Activated CD4-positive, alpha-beta memory T cell treated with anti-CD3 and anti-CD28 coated beads for 36 hours (primary cell): ENCODE measurements at regions of chr2 and their contacts with region 1.

Region 1: DNA sequence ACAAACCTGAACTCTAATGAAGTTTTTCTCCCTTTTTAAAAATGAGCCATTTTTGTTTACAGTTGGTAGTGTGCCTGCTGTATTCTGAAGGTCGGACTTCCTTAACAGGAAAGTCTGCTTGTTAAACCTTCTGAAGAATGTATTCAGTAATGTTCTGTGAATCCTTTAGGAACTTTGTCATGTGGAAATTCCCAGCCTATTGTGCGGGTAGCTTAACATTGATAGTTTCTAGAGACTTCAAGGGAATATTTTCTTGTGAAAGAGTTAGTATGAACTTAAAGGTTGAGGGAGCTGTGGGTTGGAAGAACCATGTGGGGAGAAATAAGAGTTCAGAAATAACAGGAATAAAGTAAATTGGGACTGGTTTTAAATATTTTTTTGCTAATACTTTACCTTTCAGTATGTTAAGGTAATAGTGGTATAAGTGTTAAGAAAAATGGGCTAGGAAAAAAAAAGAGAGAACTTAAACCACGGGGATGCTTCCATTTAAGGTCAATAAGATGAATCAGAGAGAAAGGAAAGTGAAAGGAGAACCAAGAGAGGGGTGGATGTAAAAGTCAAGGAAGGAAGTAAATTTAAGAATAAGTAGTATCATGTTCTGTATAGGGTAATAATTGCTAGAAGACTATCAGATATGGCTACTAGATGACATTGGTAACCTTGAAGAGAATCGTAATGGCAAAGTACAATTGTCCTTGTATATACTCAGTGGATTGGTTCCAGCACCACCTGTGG is 90.5 kb downstream of the PMS1 start:
- DNase-seq: no peak
- H3K4me3 Mint-ChIP-seq: no peak overlapping the region
- H3K27ac Mint-ChIP-seq: no peak overlapping the region
- H3K4me1 Mint-ChIP-seq: peaks cover 8% of the 10 kb centered on the region
- H3K27me3 Mint-ChIP-seq: no peaks in the 10 kb centered on the region

Region 2: DNA sequence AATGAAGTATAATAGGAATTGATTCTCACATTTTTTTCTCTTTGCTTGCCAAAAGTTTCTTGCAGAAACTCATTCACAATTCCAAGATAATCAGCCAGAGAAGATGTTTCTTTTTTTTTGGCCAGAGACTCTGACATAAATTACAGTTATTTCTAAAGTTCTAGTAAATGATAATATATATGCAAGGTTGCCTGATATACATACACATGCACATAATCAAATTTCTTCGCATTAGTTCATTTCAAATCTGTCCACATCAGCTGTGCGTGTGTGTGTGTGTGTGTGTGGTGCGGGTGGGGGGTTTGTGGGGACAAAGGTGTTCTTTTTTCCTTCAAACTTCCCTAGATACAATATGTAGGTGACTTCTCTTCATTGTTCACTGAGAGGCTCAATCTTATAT is 145.3 kb before region 1 on chr2:
- CTCF ChIA-PET with region 1: no interaction called
- POLR2A ChIA-PET with region 1: no interaction called
- intact Hi-C with region 1: loop called (anchors 10 kb)
- DNase-seq: no peak
- H3K4me3 Mint-ChIP-seq: no peak overlapping the region
- H3K27ac Mint-ChIP-seq: no peak overlapping the region
- H3K4me1 Mint-ChIP-seq: no peaks in the 10 kb centered on the region
- H3K27me3 Mint-ChIP-seq: no peaks in the 10 kb centered on the region

Region 3: DNA sequence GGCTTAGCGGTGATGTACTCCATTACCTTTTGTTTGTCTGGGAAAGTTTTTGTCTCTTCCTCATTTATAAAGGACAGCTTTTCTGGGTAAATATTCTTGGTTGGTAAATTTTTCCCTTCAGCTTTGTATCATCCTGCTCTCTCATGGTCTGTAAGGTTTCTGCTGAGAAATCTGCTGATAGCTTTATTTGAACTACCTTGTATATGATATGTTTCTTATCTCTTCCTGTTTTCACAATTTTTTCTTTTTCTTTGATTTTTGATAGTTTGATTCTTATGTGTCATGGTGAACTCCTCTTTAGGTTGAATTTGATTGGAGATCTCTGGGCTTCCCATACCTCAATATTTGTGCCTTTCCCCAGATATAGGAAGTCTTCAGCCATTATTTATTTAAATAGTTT is 143.1 kb after region 1 on chr2:
- CTCF ChIA-PET with region 1: no interaction called
- POLR2A ChIA-PET with region 1: no interaction called
- intact Hi-C with region 1: no loop called
- DNase-seq: no peak
- H3K4me3 Mint-ChIP-seq: no peak overlapping the region
- H3K27ac Mint-ChIP-seq: no peak overlapping the region
- H3K4me1 Mint-ChIP-seq: no peaks in the 10 kb centered on the region
- H3K27me3 Mint-ChIP-seq: peaks cover 13% of the 10 kb centered on the region